ENCODE measurements at regions of chr5 and their contacts with region 1.

Region 1: GRCh38 chr5:141524604-141525597 is 36.0 kb downstream of the PCDHGC5 start:
- DNase-seq: peak; percentile 96
- H3K4me3 ChIP-seq: no peak overlapping the region
- H3K27ac ChIP-seq: peak overlapping the region; percentile 63 to 73 (median 68)
- H3K4me1 ChIP-seq: peaks cover 0 to 62% (median 39%) of the 10 kb centered on the region in 4 donors
- H3K27me3 ChIP-seq: no peaks in the 10 kb centered on the region
- CTCF ChIP-seq: peak; percentile 99 to 100 (median 100)
- EP300 ChIP-seq: peak in 1 of 4 donors; percentile 54
- POLR2A ChIP-seq: no peak

Region 2: GRCh38 chr5:141223112-141223783 is 301.7 kb before region 1 on chr5 and contains the start of gene PCDHB14:
- intact Hi-C with region 1: no loop called
- DNase-seq: no peak
- H3K4me3 ChIP-seq: peak within 1 kb of the TSS; percentile 11 to 34 (median 24)
- H3K27ac ChIP-seq: no peak within 1 kb of the TSS
- H3K4me1 ChIP-seq: peaks cover 0 to 3% (median 0%) of the 10 kb centered on the region in 4 donors
- H3K27me3 ChIP-seq: no peaks in the 10 kb centered on the region
- CTCF ChIP-seq: no peak
- EP300 ChIP-seq: no peak
- POLR2A ChIP-seq: no peak
- total RNA-seq, gene PCDHB14: 6.3 to 10.5 (median 8.3) TPM

Region 3: DNA sequence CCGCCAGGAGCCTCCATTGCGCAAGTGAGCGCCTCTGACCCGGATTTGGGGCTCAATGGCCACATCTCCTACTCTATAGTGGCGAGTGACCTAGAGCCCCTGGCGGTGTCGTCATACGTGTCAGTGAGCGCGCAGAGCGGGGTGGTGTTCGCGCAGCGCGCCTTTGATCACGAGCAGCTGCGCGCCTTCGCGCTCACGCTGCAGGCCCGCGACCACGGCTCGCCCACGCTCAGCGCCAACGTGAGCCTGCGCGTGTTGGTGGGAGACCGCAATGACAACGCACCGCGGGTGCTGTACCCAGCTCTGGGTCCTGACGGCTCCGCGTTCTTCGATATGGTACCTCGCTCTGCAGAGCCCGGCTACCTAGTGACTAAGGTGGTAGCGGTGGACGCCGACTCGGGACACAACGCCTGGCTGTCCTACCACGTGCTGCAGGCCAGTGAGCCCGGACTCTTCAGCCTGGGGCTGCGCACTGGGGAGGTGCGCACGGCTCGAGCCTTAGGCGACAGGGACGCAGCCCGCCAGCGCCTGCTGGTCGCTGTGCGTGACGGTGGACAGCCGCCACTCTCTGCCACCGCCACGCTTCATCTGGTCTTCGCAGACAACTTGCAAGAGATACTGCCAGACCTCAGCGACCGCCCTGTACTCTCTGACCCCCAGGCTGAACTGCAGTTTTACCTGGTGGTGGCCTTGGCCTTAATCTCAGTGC is 115.1 kb before region 1 on chr5:
- intact Hi-C with region 1: loop called (anchors 5 kb)
- DNase-seq: peak; percentile 46
- H3K4me3 ChIP-seq: no peak overlapping the region
- H3K27ac ChIP-seq: no peak overlapping the region
- H3K4me1 ChIP-seq: no peaks in the 10 kb centered on the region
- H3K27me3 ChIP-seq: no peaks in the 10 kb centered on the region
- CTCF ChIP-seq: no peak
- EP300 ChIP-seq: no peak
- POLR2A ChIP-seq: no peak

Region 4: DNA sequence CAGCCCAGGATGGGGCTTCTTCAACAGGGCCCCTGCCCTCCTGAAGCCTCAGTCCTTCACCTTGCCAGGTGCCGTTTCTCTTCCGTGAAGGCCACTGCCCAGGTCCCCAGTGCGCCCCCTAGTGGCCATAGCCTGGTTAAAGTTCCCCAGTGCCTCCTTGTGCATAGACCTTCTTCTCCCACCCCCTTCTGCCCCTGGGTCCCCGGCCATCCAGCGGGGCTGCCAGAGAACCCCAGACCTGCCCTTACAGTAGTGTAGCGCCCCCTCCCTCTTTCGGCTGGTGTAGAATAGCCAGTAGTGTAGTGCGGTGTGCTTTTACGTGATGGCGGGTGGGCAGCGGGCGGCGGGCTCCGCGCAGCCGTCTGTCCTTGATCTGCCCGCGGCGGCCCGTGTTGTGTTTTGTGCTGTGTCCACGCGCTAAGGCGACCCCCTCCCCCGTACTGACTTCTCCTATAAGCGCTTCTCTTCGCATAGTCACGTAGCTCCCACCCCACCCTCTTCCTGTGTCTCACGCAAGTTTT is 12.5 kb before region 1 on chr5:
- intact Hi-C with region 1: loop called (anchors 2 kb)
- DNase-seq: peak; percentile 93
- H3K4me3 ChIP-seq: peak overlapping the region; percentile 50 to 72 (median 60)
- H3K27ac ChIP-seq: peak overlapping the region; percentile 89 to 97 (median 92)
- H3K4me1 ChIP-seq: peaks cover 0 to 64% (median 56%) of the 10 kb centered on the region in 4 donors
- H3K27me3 ChIP-seq: no peaks in the 10 kb centered on the region
- CTCF ChIP-seq: peak; percentile 82 to 91 (median 88)
- EP300 ChIP-seq: no peak
- POLR2A ChIP-seq: no peak

Region 5: DNA sequence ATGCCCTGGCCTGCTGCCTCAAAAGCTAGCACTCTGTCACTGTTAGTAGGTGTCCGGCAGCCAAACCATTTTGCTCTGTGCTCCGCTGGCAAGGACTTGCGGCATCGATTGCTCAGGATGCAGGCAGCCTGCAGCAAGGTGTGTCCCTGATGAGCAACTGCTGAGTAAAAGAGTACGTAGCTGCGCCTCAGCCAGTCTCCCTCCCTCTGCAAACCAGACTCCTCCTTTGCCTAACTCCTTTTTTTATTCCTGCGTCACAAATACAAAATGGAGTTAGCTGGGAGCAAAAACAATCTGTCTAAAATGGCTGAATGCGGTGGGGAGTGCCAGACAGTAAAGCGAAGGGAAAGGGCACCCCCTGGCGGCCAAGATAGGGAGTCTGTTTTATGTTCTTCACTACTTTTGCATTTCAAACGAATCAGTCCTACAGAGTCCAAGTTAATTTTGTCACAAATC is 32.8 kb after region 1 on chr5:
- intact Hi-C with region 1: loop called (anchors 2 kb)
- DNase-seq: peak; percentile 95
- H3K4me3 ChIP-seq: peak overlapping the region in 3 of 4 donors; percentile 16 to 26 (median 20)
- H3K27ac ChIP-seq: peak overlapping the region; percentile 74 to 89 (median 86)
- H3K4me1 ChIP-seq: peaks cover 0 to 32% (median 27%) of the 10 kb centered on the region in 4 donors
- H3K27me3 ChIP-seq: no peaks in the 10 kb centered on the region
- CTCF ChIP-seq: peak; percentile 70 to 88 (median 76)
- EP300 ChIP-seq: no peak
- POLR2A ChIP-seq: no peak

Region 6: DNA sequence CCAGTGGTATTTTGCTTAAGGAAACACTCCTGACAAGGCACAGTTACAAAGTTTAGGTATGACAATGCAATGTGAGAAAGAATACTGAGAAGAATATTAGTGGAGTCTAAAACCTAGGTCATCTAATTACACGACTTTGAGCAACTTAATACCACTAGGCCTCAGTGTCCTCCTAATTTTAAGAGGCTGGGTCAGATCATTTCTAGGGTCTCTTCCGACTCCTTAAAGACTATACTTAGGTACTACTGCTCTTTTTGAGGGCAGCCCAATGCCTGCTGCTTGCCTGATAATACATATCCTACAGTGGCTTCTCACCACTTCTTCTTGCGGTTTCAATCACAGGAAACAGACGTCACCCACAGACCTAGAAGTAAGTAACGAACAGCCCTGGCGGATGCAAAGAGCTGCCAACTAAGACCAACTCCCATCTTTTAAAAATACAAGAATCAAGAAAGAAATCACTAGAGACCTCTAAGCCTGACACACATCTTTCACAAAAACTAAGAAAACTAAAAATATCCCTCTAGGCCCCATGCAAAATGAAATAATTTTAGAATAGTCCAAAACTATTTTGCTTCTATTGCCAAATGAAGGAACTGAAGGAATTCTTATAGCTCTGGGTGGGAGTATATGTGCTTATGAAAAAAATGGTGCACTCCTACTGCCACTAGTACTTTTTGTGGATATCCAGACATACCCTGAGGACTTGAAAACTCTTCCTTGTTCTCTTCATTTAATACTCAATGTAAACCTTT is 80.8 kb after region 1 on chr5:
- intact Hi-C with region 1: no loop called
- DNase-seq: peak; percentile 72
- H3K4me3 ChIP-seq: no peak overlapping the region
- H3K27ac ChIP-seq: peak overlapping the region in 3 of 4 donors; percentile 22 to 69 (median 55)
- H3K4me1 ChIP-seq: peaks cover 0 to 12% (median 5%) of the 10 kb centered on the region in 4 donors
- H3K27me3 ChIP-seq: no peaks in the 10 kb centered on the region
- CTCF ChIP-seq: no peak
- EP300 ChIP-seq: no peak
- POLR2A ChIP-seq: no peak

Region 7: DNA sequence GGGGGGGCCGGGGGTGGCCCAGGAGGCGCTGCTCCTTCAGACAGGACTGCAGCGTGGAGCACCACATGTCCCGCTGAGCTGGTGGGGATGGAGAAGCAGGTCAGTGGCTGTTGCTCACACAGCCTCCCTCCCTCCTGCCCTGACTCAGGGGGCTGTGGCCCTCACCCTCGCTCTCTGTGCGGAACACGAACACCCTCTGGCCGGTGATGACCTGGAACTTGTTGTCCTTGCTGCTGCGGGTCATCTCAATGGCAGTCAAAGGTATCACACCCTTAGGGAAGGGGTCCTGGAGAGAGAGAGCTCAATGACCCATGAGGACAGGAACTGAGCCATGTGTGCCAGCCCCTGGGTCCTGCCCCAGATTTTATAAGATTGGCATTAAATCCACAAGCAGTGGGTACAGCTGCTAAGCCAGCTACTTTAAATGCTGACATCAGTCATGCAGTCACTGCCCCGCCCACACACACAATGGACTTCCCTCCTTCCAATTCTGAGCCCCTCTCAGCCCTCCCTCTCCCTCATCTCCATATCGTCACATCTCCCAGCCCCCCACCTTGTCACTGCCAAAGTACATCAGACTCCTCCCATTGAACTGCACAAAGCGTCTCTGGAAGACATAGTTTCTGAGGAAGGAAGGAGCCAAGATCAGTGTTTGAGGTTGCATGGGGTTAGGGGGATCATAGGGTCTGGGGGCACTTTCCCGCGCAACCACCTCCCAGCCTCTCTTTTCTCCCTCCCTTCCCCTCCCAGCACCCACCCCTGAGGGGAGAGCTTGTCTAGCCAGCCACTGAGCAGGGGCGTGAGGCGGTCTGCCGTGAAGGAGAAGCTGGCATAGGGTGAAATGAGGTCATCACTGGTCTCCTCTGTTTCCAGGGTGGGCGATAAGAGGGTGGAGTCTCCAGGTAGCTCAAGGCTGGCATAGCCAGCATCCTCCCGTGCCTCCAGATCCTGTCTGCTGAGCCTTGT is 148.2 kb after region 1 on chr5:
- intact Hi-C with region 1: no loop called
- DNase-seq: no peak
- H3K4me3 ChIP-seq: no peak overlapping the region
- H3K27ac ChIP-seq: no peak overlapping the region
- H3K4me1 ChIP-seq: no peaks in the 10 kb centered on the region
- H3K27me3 ChIP-seq: no peaks in the 10 kb centered on the region
- CTCF ChIP-seq: no peak
- EP300 ChIP-seq: no peak
- POLR2A ChIP-seq: no peak

Region 8: GRCh38 chr5:141835928-141836670 is 311.2 kb after region 1 on chr5:
- intact Hi-C with region 1: no loop called
- DNase-seq: no peak
- H3K4me3 ChIP-seq: no peak overlapping the region
- H3K27ac ChIP-seq: peak overlapping the region in 3 of 4 donors; percentile 2 to 49 (median 45)
- H3K4me1 ChIP-seq: peaks cover 0 to 6% (median 0%) of the 10 kb centered on the region in 4 donors
- H3K27me3 ChIP-seq: peaks cover 0 to 20% (median 0%) of the 10 kb centered on the region in 3 donors
- CTCF ChIP-seq: no peak
- EP300 ChIP-seq: no peak
- POLR2A ChIP-seq: no peak

Measured in sigmoid colon (tissue), 7 donors.